Ovary (tissue), 10 donors: ENCODE measurements at regions of chr18 and their contacts with region 1.

Region 1: DNA sequence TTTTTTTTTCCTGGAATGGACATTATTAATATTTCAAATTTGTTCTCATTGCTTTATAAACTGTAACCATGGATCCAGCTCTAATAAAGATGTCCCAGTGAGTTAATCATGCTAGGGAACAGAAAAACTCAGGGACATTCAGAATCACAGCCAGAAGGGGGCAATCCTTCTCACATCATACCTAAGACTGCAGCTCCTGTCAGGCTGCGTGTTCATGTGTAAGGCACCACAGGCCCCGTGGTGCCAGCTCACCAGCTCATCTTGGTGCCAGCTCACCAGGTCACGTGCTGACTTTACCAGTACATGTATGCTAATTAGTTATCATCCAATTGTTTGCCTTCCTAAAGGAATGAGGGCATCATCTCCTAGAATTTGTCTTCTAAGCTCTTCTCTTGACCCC is 84.7 kb upstream of the NEDD4L start:
- DNase-seq: no peak
- H3K4me3 ChIP-seq: no peak overlapping the region
- H3K27ac ChIP-seq: no peak overlapping the region
- H3K4me1 ChIP-seq: no peaks in the 10 kb centered on the region
- H3K27me3 ChIP-seq: no peaks in the 10 kb centered on the region
- CTCF ChIP-seq: no peak
- EP300 ChIP-seq: no peak
- POLR2A ChIP-seq: no peak

Region 2: GRCh38 chr18:56257205-56257604 is 1702.1 kb before region 1 on chr18:
- intact Hi-C with region 1: no loop called
- DNase-seq: no peak
- H3K4me3 ChIP-seq: no peak overlapping the region
- H3K27ac ChIP-seq: no peak overlapping the region
- H3K4me1 ChIP-seq: no peaks in the 10 kb centered on the region
- H3K27me3 ChIP-seq: no peaks in the 10 kb centered on the region
- CTCF ChIP-seq: no peak
- EP300 ChIP-seq: no peak
- POLR2A ChIP-seq: no peak

Region 3: DNA sequence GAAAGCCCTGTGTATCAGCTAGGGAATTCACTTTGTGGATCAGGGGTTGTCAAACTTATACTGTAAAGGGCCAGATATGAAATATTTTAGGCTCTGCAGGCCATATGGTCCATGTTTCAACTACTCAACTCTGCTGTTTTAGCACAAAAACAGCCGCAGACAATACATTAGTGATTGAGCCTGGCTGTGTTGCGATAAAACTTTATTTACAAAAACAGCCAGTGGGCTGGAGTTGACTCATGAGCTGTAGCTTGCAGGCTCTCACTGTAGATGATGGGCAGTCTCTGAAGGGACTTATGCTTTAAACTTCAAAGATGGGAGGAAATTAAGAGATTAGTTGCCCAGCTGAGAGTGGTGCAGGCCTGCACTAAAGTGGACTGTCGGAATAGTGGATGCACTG is 1275.0 kb before region 1 on chr18:
- intact Hi-C with region 1: loop called in 1 of 4 experiments (anchors 10 kb)
- DNase-seq: no peak
- H3K4me3 ChIP-seq: no peak overlapping the region
- H3K27ac ChIP-seq: no peak overlapping the region
- H3K4me1 ChIP-seq: no peaks in the 10 kb centered on the region
- H3K27me3 ChIP-seq: no peaks in the 10 kb centered on the region
- CTCF ChIP-seq: no peak
- EP300 ChIP-seq: no peak
- POLR2A ChIP-seq: no peak

Region 4: DNA sequence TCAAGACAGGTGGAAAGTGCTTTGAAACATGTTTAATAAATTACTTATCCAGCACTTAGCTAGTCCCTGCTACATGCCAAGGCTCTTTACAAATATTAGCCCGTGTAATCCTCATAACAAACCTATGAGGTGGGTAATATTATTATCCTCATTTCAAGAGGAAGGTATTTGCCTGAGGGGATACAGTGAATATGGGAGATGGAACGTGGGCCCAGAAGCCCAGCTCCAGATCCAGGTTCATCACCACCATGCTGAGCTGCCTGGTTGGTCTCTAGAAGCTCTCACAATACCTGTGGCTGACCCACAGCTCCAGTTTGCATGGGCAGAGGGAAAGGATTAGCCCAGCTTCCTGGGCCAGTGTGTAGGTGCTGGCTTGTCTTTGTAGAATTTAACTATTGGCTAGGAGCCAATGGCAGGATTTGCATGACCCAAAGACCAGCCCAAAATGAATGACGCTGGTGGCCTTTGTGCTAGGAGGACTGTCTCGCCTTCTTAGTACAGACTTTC is 94.6 kb before region 1 on chr18:
- intact Hi-C with region 1: no loop called
- DNase-seq: no peak
- H3K4me3 ChIP-seq: no peak overlapping the region
- H3K27ac ChIP-seq: no peak overlapping the region
- H3K4me1 ChIP-seq: no peaks in the 10 kb centered on the region
- H3K27me3 ChIP-seq: no peaks in the 10 kb centered on the region
- CTCF ChIP-seq: no peak
- EP300 ChIP-seq: no peak
- POLR2A ChIP-seq: no peak